GM12878 (cell line): ENCODE measurements at regions of chr7 and their contacts with region 1.

Region 1: DNA sequence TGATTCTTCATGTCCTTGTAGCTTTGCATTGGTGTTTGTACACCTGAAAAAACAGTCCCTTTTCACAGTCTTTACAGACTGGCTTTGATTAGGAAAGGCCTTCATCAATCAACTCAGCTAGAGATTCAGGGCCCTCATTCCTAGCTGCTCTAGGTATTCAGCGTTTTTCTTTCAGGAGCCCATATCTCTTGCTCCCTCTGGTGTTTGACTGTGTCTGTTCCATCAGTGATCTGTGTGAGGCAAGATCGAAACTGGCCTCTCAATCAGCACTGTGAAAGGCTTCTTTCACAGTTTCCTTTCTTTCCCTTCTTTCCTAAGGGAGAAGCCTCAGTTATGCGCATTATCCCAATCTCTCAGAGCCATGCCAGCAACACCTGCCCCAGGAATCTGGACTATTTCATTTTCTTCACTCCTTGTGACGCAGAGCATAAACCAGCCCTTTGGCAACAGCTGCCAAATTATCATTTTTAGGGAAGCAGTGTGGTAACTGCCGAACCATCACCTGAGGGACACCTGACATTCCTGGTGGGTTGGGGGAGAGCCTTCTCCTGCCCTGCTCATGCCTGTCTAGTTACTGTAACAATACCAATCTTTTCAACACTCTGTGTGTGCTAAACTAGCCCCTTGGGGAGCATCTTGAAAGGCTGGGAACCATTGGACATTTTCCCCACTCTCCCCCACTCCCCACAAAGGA is 75.7 kb upstream of the CCDC71L start:
- DNase-seq: peak; percentile 48
- ATAC-seq: peak; percentile 98
- H3K4me3 ChIP-seq: no peak overlapping the region
- H3K27ac ChIP-seq: no peak overlapping the region
- H3K4me1 ChIP-seq: peaks cover 15% of the 10 kb centered on the region
- H3K27me3 ChIP-seq: no peaks in the 10 kb centered on the region
- CTCF ChIP-seq: peak; percentile 75 to 86 (median 80)
- EP300 ChIP-seq: no peak
- POLR2A ChIP-seq: no peak
- RAD21 ChIP-seq: peak; percentile 97

Region 2: DNA sequence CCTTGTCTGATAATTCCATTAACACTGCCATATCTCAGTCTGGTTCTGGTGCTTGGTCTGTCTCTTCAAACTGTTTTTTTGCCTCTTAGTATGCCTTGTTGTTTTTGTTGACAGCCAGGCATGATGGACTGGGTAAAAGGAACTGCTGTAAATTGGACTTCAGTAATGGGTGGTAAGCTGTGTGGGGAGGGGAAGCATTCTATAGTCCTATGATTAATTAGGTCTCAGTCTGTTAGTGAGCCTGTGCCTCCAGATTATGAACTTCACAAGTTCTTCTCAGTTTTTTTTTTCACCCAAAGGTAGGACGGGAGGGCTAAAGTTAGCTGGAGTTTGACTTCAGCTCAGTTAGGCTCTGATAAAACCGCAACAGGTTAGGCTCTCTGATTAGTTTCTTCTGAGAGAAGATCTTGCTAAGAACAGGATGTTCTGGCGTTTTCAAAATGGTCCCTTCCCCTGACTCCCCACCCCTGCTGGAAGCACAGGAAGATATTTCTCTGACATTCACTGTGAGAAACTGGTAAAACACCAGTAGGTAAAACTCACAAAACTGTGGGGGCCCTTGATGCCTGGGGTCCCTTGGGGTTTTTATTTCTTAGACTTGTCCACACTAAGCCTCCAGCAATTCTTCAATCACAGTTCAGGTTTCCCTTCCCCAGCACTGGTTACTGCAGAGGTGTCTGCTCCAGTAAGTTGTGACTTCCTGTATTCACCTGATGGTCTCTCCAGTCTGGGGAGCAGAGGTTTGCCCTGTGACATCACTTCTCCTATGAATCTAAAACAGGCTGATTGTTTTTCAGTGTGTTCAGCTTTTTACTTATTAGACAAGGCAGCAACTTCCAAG is 32.4 kb before region 1 on chr7:
- CTCF ChIA-PET with region 1: interaction called, 10 read pairs
- POLR2A ChIA-PET with region 1: no interaction called
- RAD21 ChIA-PET with region 1: interaction called, 4 read pairs
- SMC1A ChIA-PET with region 1: interaction called, 5 read pairs
- in situ Hi-C with region 1: no loop called
- intact Hi-C with region 1: no loop called
- DNase-seq: no peak
- ATAC-seq: peak; percentile 76
- H3K4me3 ChIP-seq: no peak overlapping the region
- H3K27ac ChIP-seq: no peak overlapping the region
- H3K4me1 ChIP-seq: no peaks in the 10 kb centered on the region
- H3K27me3 ChIP-seq: no peaks in the 10 kb centered on the region
- CTCF ChIP-seq: no peak
- EP300 ChIP-seq: no peak
- POLR2A ChIP-seq: no peak
- RAD21 ChIP-seq: no peak

Region 3: DNA sequence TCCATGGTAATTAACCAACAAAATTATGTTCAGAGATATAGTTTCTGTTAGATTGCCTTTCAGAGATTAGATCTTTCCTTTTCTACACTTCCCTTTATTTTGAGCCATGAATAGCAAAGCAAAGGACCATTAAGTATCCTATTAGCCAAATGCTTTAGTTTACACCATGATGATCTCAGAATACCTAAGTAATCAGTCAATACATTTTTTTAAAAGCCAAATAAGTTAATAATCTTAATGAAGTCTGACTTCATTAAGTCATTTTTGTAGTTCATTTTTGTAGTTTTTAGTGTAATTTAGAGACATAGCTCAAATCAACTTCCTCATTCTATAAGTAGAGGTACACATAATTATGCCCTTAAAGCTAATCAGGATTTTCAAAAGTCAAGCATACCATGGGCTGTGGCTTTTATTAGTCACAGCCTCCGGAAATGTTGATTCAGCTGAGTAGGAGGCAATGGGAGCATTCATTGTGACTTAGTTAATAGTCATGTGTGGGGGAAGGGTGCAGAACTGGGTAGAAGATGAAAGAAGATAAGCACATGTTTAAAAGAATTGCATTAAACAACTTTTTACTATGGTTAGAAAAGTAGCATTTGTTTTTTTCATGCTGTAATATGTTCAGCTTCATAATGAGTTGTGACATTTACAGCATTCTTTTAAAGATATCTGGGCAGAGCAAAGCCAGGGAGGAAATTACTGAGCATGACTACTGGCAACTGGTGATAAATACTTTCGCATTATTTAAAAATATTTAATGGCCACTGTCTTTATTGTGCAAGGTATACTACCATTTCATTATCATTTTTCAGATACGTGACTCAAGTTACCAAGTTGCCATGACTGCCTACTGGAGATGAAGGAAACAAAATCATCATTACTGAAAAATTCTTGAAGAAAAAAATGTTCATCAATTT is 18.4 kb before region 1 on chr7:
- CTCF ChIA-PET with region 1: interaction called, 20 read pairs
- POLR2A ChIA-PET with region 1: interaction called, 5 read pairs
- RAD21 ChIA-PET with region 1: interaction called, 34 read pairs
- SMC1A ChIA-PET with region 1: interaction called, 84 read pairs
- in situ Hi-C with region 1: no loop called
- intact Hi-C with region 1: loop called (anchors 1 kb)
- DNase-seq: peak; percentile 81
- ATAC-seq: peak; percentile 96
- H3K4me3 ChIP-seq: no peak overlapping the region
- H3K27ac ChIP-seq: peak overlapping the region; percentile 54
- H3K4me1 ChIP-seq: peaks cover 41% of the 10 kb centered on the region
- H3K27me3 ChIP-seq: no peaks in the 10 kb centered on the region
- CTCF ChIP-seq: no peak
- EP300 ChIP-seq: peak; percentile 68 to 87; a peak in 3 of 4 replicates
- POLR2A ChIP-seq: no peak
- RAD21 ChIP-seq: peak; percentile 22; the same call in 1 of the 2 replicates

Region 4: GRCh38 chr7:106747804-106748203 is 11.1 kb after region 1 on chr7:
- CTCF ChIA-PET with region 1: interaction called, 10 read pairs
- POLR2A ChIA-PET with region 1: no interaction called
- RAD21 ChIA-PET with region 1: interaction called, 5 read pairs
- SMC1A ChIA-PET with region 1: interaction called, 6 read pairs
- in situ Hi-C with region 1: no loop called
- intact Hi-C with region 1: no loop called
- DNase-seq: no peak
- ATAC-seq: no peak
- H3K4me3 ChIP-seq: no peak overlapping the region
- H3K27ac ChIP-seq: no peak overlapping the region
- H3K4me1 ChIP-seq: no peaks in the 10 kb centered on the region
- H3K27me3 ChIP-seq: no peaks in the 10 kb centered on the region; a peak in 1 of 4 replicates
- CTCF ChIP-seq: no peak
- EP300 ChIP-seq: no peak
- POLR2A ChIP-seq: no peak
- RAD21 ChIP-seq: no peak